ENCODE measurements at regions of chr2 and their contacts with region 1.

Region 1: GRCh38 chr2:46364797-46365457 is 67.7 kb downstream of the EPAS1 start:
- DNase-seq: peak; percentile 70
- CTCF ChIP-seq: peak; percentile 70

Region 2: DNA sequence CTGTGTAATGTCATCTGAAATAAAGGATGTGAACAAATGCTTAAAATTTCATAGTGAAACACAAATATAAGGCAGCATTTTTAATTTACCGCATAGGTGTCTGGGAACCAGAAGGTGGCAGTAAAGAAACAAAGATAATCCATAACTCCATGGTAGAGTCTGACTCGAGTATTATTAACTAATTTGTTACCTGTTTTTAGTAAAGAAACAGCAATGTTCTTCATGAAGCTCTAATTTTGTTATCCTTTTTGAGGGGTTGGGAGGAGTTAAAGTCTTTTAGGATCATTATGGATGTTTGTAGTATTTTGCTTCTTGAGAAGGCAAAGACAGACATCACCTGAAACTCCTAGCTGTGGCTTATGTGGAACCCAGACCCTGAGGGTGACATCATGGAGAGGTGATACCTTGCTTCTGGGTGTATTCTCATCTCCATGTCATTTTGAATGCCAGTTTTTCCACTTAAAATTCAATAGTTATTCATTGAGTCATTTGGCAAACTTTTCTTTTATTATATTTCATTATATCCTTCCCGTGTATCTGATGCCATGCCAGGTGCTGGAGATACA is 353.9 kb before region 1 on chr2:
- CTCF ChIA-PET with region 1: interaction called, 11 read pairs
- POLR2A ChIA-PET with region 1: no interaction called
- DNase-seq: peak; percentile 59
- CTCF ChIP-seq: peak; percentile 56